Activated CD8-positive, alpha-beta T cell treated with anti-CD3 and anti-CD28 coated beads for 36 hours (primary cell): ENCODE measurements at regions of chr14 and their contacts with region 1.

Region 1: GRCh38 chr14:89371585-89372511 is 45.2 kb downstream of the FOXN3 start:
- DNase-seq: no peak
- ATAC-seq: no peak
- H3K4me3 Mint-ChIP-seq: no peak overlapping the region
- H3K27ac Mint-ChIP-seq: peak overlapping the region; percentile 48
- H3K4me1 Mint-ChIP-seq: peaks cover 70% of the 10 kb centered on the region
- H3K27me3 Mint-ChIP-seq: no peaks in the 10 kb centered on the region
- CTCF ChIP-seq: no peak

Region 2: DNA sequence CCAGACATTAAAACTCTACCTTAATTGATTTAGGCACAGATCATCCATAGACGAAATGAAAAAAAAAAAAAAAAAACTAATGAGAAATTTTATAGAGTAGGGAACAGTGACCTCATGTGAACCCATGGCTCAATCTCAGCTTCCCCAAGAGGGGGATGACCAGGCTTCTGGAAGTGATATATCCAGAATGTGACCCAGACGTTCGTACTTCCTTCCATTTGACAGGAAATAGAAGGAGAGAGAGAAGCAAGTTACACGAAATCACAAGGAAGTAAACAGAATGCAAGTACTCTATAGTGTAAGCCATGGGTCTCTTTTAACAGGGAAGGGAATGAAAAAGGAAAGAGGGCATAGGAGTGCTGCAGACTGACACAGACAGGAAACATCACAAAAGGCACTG is 35.1 kb after region 1 on chr14:
- CTCF ChIA-PET with region 1: interaction called, 3 read pairs
- POLR2A ChIA-PET with region 1: no interaction called
- intact Hi-C with region 1: loop called (anchors 5 kb)
- DNase-seq: no peak
- ATAC-seq: no peak
- H3K4me3 Mint-ChIP-seq: no peak overlapping the region
- H3K27ac Mint-ChIP-seq: peak overlapping the region; percentile 28
- H3K4me1 Mint-ChIP-seq: peaks cover 77% of the 10 kb centered on the region
- H3K27me3 Mint-ChIP-seq: no peaks in the 10 kb centered on the region
- CTCF ChIP-seq: no peak

Region 3: GRCh38 chr14:89855961-89856656 is 484.3 kb after region 1 on chr14:
- CTCF ChIA-PET with region 1: no interaction called
- POLR2A ChIA-PET with region 1: no interaction called
- intact Hi-C with region 1: no loop called
- DNase-seq: no peak
- ATAC-seq: no peak
- H3K4me3 Mint-ChIP-seq: no peak overlapping the region
- H3K27ac Mint-ChIP-seq: no peak overlapping the region
- H3K4me1 Mint-ChIP-seq: no peaks in the 10 kb centered on the region
- H3K27me3 Mint-ChIP-seq: no peaks in the 10 kb centered on the region
- CTCF ChIP-seq: no peak